Calu3 (cell line): ENCODE measurements at regions of chr3 and their contacts with region 1.

Region 1: GRCh38 chr3:155079746-155080487 is at the start of gene MME:
- DNase-seq: peak; percentile 58
- H3K4me3 Mint-ChIP-seq: peak within 1 kb of the TSS; percentile 94
- H3K27ac Mint-ChIP-seq: peak within 1 kb of the TSS; percentile 53
- H3K4me1 Mint-ChIP-seq: peaks cover 24% of the 10 kb centered on the region
- H3K27me3 Mint-ChIP-seq: no peaks in the 10 kb centered on the region
- CTCF ChIP-seq: no peak
- total RNA-seq, gene MME: 12.8 and 14.4 TPM in 2 replicates

Region 2: GRCh38 chr3:154954753-154955152 is 125.2 kb before region 1 on chr3:
- CTCF ChIA-PET with region 1: no interaction called
- intact Hi-C with region 1: loop called (anchors 5 kb)
- DNase-seq: no peak
- H3K4me3 Mint-ChIP-seq: no peak overlapping the region
- H3K27ac Mint-ChIP-seq: no peak overlapping the region
- H3K4me1 Mint-ChIP-seq: peaks cover 13% of the 10 kb centered on the region
- H3K27me3 Mint-ChIP-seq: no peaks in the 10 kb centered on the region
- CTCF ChIP-seq: peak; percentile 37

Region 3: GRCh38 chr3:155184011-155184410 is 104.1 kb after region 1 on chr3:
- CTCF ChIA-PET with region 1: no interaction called
- intact Hi-C with region 1: loop called (anchors 5 kb)
- DNase-seq: no peak
- H3K4me3 Mint-ChIP-seq: no peak overlapping the region
- H3K27ac Mint-ChIP-seq: no peak overlapping the region
- H3K4me1 Mint-ChIP-seq: peaks cover 15% of the 10 kb centered on the region
- H3K27me3 Mint-ChIP-seq: no peaks in the 10 kb centered on the region
- CTCF ChIP-seq: no peak

Region 4: DNA sequence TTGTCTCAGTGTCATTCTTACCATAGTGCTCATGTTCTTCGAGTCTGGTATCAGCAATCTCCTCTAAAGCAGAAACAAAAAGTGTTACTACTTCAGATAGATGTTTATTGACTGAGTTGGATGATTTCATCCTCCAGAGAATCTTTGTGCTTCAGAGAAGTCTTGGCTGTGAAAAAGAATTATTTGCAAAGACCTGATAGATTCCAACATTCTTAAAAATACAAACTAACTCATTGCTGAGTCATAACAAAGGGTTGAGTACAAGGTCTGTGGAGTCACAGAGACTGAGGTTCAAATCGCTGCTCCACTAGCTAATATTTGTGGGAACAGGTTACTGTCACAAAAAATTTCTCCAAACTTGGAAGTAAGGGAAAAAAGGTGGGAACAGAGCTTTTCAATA is 222.6 kb after region 1 on chr3:
- CTCF ChIA-PET with region 1: no interaction called
- intact Hi-C with region 1: loop called (anchors 5 kb)
- DNase-seq: no peak
- H3K4me3 Mint-ChIP-seq: peak overlapping the region; percentile 37
- H3K27ac Mint-ChIP-seq: peak overlapping the region; percentile 40
- H3K4me1 Mint-ChIP-seq: peaks cover 27% of the 10 kb centered on the region
- H3K27me3 Mint-ChIP-seq: no peaks in the 10 kb centered on the region
- CTCF ChIP-seq: no peak